ENCODE measurements at regions of chr3 and their contacts with region 1.

Region 1: DNA sequence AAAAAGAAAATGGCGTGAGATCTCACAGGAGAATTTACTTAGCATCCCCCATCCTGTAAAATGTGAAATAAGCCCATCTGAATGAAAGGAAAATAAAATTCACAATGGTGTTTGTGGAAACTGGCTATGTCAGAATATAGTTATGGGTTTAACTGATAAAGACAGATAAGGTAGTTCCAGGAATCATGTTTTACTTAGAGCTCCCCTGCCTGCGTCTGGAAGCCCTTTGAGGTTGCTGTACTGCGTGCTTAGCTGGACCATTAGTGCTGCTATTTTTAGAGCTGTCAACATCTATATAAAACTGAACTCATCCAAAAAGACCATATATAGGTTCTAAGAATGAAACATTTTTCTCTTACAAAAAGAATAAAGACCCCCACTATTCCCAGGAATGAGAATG is 130.8 kb downstream of the LSAMP start:
- DNase-seq: no peak
- ATAC-seq: no peak
- H3K4me3 ChIP-seq: no peak overlapping the region
- H3K27ac ChIP-seq: no peak overlapping the region
- H3K4me1 ChIP-seq: no peaks in the 10 kb centered on the region
- H3K27me3 ChIP-seq: no peaks in the 10 kb centered on the region
- CTCF ChIP-seq: no peak
- EP300 ChIP-seq: no peak
- POLR2A ChIP-seq: no peak
- RAD21 ChIP-seq: no peak

Region 2: DNA sequence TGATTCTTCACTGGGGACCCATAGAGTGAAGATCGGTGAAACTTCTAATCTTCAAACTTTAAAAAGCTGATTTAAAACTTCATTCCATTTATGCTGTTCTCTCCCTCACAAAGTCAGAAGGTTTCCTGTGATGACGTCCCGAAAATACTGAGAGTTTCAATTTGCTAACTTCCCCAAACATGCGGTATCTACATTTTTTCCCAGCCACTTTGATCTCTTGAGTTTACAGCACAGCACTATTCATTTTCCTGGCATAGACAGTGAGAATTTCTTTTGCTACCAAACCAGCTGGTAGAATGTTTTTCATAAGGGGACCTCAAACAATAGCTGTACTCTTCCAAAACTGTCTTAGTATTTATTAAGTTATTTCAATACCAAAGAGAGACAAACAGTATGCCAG is 26.0 kb before region 1 on chr3:
- CTCF ChIA-PET with region 1: no interaction called
- POLR2A ChIA-PET with region 1: no interaction called
- RAD21 ChIA-PET with region 1: interaction called, 3 read pairs
- SMC1A ChIA-PET with region 1: interaction called, 10 read pairs
- in situ Hi-C with region 1: no loop called
- intact Hi-C with region 1: no loop called
- DNase-seq: peak; percentile 34
- ATAC-seq: peak; percentile 87
- H3K4me3 ChIP-seq: no peak overlapping the region
- H3K27ac ChIP-seq: no peak overlapping the region
- H3K4me1 ChIP-seq: no peaks in the 10 kb centered on the region
- H3K27me3 ChIP-seq: no peaks in the 10 kb centered on the region; a peak in 1 of 4 replicates
- CTCF ChIP-seq: no peak
- EP300 ChIP-seq: peak; percentile 47 to 60; a peak in 2 of 4 replicates
- POLR2A ChIP-seq: no peak
- RAD21 ChIP-seq: no peak

Region 3: DNA sequence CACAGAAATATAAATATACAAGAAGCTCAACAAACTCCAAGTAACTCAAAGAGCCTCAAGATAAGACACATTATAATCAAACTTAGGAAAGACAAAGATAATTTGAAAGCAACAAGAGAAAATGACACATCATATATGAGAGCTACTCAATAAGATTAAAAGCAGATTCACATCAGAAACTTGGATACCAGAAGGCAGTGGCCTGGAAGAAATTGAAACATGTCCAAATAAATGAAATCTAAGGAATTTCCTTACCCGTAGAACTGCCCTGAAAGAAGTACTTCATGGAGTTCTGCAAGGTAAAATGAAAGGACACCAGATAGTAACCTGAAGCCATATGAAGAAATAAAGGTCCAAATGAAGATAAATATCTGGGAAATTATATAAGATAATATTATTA is 16.9 kb after region 1 on chr3:
- CTCF ChIA-PET with region 1: no interaction called
- POLR2A ChIA-PET with region 1: no interaction called
- RAD21 ChIA-PET with region 1: interaction called, 3 read pairs
- SMC1A ChIA-PET with region 1: interaction called, 20 read pairs
- in situ Hi-C with region 1: no loop called
- intact Hi-C with region 1: no loop called
- DNase-seq: no peak
- ATAC-seq: no peak
- H3K4me3 ChIP-seq: no peak overlapping the region
- H3K27ac ChIP-seq: no peak overlapping the region
- H3K4me1 ChIP-seq: no peaks in the 10 kb centered on the region
- H3K27me3 ChIP-seq: no peaks in the 10 kb centered on the region
- CTCF ChIP-seq: no peak
- EP300 ChIP-seq: no peak
- POLR2A ChIP-seq: no peak
- RAD21 ChIP-seq: no peak

Region 4: GRCh38 chr3:116886202-116886893 is 571.9 kb after region 1 on chr3:
- CTCF ChIA-PET with region 1: no interaction called
- POLR2A ChIA-PET with region 1: no interaction called
- RAD21 ChIA-PET with region 1: no interaction called
- SMC1A ChIA-PET with region 1: no interaction called
- in situ Hi-C with region 1: no loop called
- intact Hi-C with region 1: no loop called
- DNase-seq: peak; percentile 48
- ATAC-seq: peak; percentile 97
- H3K4me3 ChIP-seq: peak overlapping the region; percentile 52; the same call in 1 of the 2 replicates
- H3K27ac ChIP-seq: peak overlapping the region; percentile 71
- H3K4me1 ChIP-seq: peaks cover 3% of the 10 kb centered on the region; the same call in 1 of the 2 replicates
- H3K27me3 ChIP-seq: no peaks in the 10 kb centered on the region
- CTCF ChIP-seq: no peak
- EP300 ChIP-seq: no peak
- POLR2A ChIP-seq: no peak
- RAD21 ChIP-seq: no peak